ENCODE measurements at regions of chr4 and their contacts with region 1.

Region 1: DNA sequence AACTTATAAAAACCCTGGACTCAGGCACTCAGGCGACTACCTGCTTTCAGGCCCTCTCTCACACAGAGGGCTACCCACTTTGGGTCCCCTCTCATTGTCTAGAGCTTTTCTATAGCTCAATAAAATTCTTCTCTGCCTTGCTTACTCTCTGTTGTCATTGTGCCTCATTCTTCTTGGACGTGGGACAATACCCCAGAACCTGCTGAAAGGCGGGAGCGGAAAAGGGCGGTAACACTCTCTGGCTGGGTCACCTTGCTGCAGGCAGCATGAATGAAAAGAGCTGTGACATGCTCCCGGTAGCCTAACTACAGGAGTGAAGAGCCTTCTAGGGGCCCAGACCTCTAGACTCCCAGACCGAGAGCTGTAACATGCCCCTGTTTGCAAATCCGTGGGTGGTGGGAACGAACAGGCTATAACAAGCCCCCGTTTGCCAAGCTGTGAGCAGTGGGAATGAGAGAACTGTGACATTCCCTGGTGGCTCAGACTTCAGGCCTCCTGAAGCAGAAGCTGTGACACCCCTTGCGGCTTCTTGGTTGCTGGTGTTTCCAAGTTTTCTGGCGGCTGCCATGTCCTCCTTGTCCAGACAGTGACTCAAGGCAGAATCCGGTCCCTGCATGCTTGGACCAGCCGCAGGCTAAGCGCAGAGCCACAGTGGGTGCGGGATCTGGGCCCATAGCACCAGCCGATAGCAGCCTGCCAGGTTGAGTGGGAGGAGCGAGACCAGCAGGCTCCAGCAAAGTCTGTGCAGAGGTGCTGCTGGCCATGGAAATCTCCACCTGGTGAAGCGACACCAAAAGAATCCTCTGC is 684.6 kb downstream of the ARAP2 start:
- DNase-seq: no peak
- ATAC-seq: no peak
- H3K4me3 ChIP-seq: no peak overlapping the region
- H3K27ac ChIP-seq: no peak overlapping the region
- H3K4me1 ChIP-seq: no peaks in the 10 kb centered on the region
- H3K27me3 ChIP-seq: no peaks in the 10 kb centered on the region
- CTCF ChIP-seq: no peak
- EP300 ChIP-seq: no peak
- POLR2A ChIP-seq: no peak
- RAD21 ChIP-seq: no peak

Region 2: GRCh38 chr4:35493977-35494376 is 65.8 kb before region 1 on chr4:
- CTCF ChIA-PET with region 1: no interaction called
- POLR2A ChIA-PET with region 1: no interaction called
- in situ Hi-C with region 1: no loop called
- intact Hi-C with region 1: loop called (anchors 2 kb)
- DNase-seq: no peak
- ATAC-seq: no peak
- H3K4me3 ChIP-seq: no peak overlapping the region
- H3K27ac ChIP-seq: no peak overlapping the region
- H3K4me1 ChIP-seq: no peaks in the 10 kb centered on the region
- H3K27me3 ChIP-seq: no peaks in the 10 kb centered on the region
- CTCF ChIP-seq: no peak
- EP300 ChIP-seq: no peak
- POLR2A ChIP-seq: no peak
- RAD21 ChIP-seq: no peak

Measured in HepG2 (cell line).